Activated B cell treated with CpG ODN at 0.5 μM for 24 hours (primary cell): ENCODE measurements at regions of chr18 and their contacts with region 1.

Region 1: GRCh38 chr18:70598406-70598805 is 309.6 kb downstream of the SOCS6 start:
- DNase-seq: no peak
- ATAC-seq: no peak
- H3K4me3 Mint-ChIP-seq: no peak overlapping the region
- H3K27ac Mint-ChIP-seq: no peak overlapping the region
- H3K4me1 Mint-ChIP-seq: no peaks in the 10 kb centered on the region
- H3K27me3 Mint-ChIP-seq: no peaks in the 10 kb centered on the region
- CTCF ChIP-seq: no peak

Region 2: GRCh38 chr18:69300185-69300584 is 1298.2 kb before region 1 on chr18:
- CTCF ChIA-PET with region 1: no interaction called
- POLR2A ChIA-PET with region 1: no interaction called
- intact Hi-C with region 1: no loop called
- DNase-seq: no peak
- ATAC-seq: no peak
- H3K4me3 Mint-ChIP-seq: no peak overlapping the region
- H3K27ac Mint-ChIP-seq: no peak overlapping the region
- H3K4me1 Mint-ChIP-seq: no peaks in the 10 kb centered on the region
- H3K27me3 Mint-ChIP-seq: no peaks in the 10 kb centered on the region
- CTCF ChIP-seq: no peak

Region 3: DNA sequence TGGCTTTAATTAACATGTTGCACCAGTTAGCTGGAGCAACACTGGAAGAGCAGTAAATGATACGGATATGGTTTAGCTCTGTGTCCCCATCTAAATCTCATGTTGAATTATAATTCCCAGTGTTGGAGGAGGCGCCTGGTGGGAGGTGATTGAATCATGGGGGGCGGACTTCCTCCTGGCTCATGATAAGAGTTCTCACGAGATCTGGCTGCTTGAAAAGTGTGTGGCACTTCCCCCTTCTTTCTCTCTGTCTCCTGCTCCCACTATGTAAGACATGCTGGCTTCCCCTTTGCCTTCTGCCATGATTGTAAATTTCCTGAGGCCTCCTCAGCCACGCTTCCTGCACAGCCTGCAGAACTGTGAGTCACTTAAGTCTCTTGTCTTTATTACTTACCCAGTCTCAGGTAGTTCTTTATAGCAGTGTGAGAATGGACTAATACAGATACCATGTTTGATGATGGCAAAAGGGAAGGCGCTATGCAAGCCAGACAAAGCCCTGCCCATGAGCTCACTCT is 654.0 kb after region 1 on chr18:
- CTCF ChIA-PET with region 1: no interaction called
- POLR2A ChIA-PET with region 1: no interaction called
- intact Hi-C with region 1: no loop called
- DNase-seq: no peak
- ATAC-seq: no peak
- H3K4me3 Mint-ChIP-seq: no peak overlapping the region
- H3K27ac Mint-ChIP-seq: no peak overlapping the region
- H3K4me1 Mint-ChIP-seq: no peaks in the 10 kb centered on the region
- H3K27me3 Mint-ChIP-seq: no peaks in the 10 kb centered on the region
- CTCF ChIP-seq: no peak

Region 4: GRCh38 chr18:72544092-72544886 is 1945.9 kb after region 1 on chr18 and contains the start of gene CBLN2:
- CTCF ChIA-PET with region 1: no interaction called
- POLR2A ChIA-PET with region 1: no interaction called
- intact Hi-C with region 1: loop called (anchors 2 kb)
- DNase-seq: peak; percentile 36
- ATAC-seq: peak; percentile 56
- H3K4me3 Mint-ChIP-seq: peak within 1 kb of the TSS; percentile 55
- H3K27ac Mint-ChIP-seq: no peak within 1 kb of the TSS
- H3K4me1 Mint-ChIP-seq: peaks cover 12% of the 10 kb centered on the region
- H3K27me3 Mint-ChIP-seq: peaks cover 35% of the 10 kb centered on the region
- CTCF ChIP-seq: no peak
- total RNA-seq, gene CBLN2: 0.09 TPM in 1 of 2 replicates, not detected in the other